ENCODE measurements at regions of chr1 and their contacts with region 1.

Region 1: GRCh38 chr1:115112496-115113375 is 23.4 kb upstream of the TSPAN2 start:
- DNase-seq: no peak

Region 2: DNA sequence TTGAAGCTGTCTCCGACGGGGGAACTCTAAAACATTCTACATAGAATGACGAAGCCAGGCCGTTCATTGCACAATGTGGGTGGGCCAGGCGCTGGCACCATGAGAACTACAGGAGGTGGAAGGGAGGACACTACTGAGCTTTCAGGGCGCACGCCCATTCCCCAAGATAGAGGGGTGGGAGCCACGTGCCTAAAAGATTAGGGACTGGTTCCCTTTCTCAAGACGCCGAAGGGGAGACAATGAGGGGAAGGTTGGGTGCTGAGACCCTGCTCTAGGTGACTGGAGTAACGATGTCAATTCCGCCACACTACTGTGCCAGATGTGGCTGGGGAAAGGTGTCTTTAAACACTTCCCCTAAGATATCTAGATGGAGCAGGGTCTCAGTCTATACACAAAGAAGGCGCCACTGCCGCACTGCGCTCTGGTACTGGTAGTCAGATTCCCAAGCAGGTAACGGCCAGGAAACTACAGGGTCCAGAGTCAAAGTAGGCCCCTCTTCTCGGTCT is 355.7 kb before region 1 on chr1:
- intact Hi-C with region 1: no loop called
- DNase-seq: peak; percentile 84

Region 3: DNA sequence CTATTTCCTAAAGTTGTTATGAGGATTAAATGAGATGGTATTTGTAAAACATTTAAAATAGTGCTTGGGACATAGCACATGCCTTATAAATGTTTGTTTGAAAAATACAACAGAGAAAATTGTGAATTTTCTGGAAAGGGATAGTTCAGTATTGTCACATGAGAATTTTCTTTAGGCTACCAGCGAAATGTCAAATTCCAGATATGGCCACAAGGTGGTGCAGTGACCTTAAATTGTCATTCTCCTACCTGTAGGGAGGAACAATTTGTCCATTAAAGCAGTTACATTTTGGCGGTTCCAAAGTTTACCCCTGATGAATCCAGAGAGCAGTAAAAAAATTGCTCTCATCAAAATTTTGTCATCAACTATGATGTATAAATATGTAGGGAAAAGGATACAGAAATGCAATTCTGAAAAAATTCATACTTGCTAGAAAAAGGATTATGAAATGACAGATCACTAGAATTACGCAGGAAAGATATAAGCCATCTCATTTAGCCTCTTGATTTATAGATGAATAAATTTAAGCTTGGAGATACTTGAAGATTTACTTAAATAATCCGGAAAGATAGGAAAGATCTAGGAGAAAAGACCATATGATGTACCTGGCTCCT is 133.4 kb before region 1 on chr1:
- intact Hi-C with region 1: loop called (anchors 2 to 5 kb)
- DNase-seq: no peak

Region 4: GRCh38 chr1:115302390-115302961 is 189.7 kb after region 1 on chr1:
- intact Hi-C with region 1: no loop called
- DNase-seq: no peak